Activated T-helper 2 cell treated with anti-CD3 and anti-CD28 coated beads, Interferon-gamma antibody, Interleukin-2, Interleukin-4, amounts not matched to agents 10 μg/mL and 5 μg/mL and 100 μg/mL, durations not matched to agents 14 hours and 24 hours and 36 hours (primary cell): ENCODE measurements at regions of chr15 and their contacts with region 1.

Region 1: DNA sequence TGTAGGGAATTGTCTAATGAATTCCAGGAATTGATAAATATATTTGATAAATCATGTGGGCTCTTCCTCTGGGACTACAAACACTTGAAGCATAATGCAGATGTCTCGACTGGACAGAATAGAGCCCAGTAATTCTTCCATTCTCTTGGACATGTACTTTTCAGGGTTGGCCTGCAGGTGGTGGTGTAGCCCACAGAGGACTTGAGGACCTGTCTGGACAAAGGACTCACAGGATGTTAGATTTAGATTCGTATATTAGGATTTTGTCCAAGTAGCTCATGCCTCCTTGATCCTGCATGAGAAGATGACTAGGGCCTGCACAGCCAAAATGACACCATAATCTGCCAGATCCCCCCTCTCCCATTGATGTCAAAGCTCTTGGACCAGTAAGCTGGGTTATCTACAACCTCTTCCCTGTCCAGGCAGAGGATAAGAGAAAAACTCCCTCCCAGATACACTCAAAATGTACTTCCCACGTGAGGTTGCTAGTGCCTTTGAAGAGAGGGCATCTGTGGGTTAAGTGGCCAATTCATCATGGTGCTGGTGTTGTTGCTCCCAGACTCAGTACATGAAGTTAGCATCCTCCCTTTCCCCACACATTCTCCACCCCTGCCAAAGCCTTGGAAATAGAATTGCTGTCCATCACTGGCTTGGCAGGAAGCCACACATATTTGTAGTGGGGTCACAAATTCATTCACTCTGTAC is 88.6 kb upstream of the ZNF280D start:
- DNase-seq: peak; percentile 17
- H3K4me3 Mint-ChIP-seq: no peak overlapping the region
- H3K27ac Mint-ChIP-seq: no peak overlapping the region
- H3K4me1 Mint-ChIP-seq: peaks cover 3% of the 10 kb centered on the region
- H3K27me3 Mint-ChIP-seq: peaks cover 4% of the 10 kb centered on the region

Region 2: GRCh38 chr15:56805466-56806146 is 16.3 kb before region 1 on chr15:
- intact Hi-C with region 1: no loop called
- DNase-seq: no peak
- H3K4me3 Mint-ChIP-seq: no peak overlapping the region
- H3K27ac Mint-ChIP-seq: no peak overlapping the region
- H3K4me1 Mint-ChIP-seq: peaks cover 5% of the 10 kb centered on the region
- H3K27me3 Mint-ChIP-seq: peaks cover 9% of the 10 kb centered on the region

Region 3: DNA sequence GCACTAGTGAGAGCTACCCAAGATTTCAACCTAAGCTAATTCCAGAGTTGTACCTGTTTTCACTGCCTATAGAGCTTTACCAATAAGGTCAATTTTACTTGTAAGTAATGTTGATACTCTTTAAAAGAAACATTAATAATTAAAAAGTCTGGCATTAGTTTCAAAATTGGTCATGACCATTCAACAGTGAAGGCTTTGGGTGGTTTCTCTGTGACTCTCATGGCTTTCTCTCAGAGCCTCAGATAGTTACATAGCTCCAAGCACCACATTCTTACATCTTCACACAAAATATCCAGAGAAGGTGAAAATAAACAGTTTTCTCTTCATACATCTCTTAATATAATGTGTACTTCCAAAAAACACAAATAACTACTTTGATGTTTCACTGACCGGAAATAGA is 35.1 kb after region 1 on chr15:
- intact Hi-C with region 1: no loop called
- DNase-seq: no peak
- H3K4me3 Mint-ChIP-seq: no peak overlapping the region
- H3K27ac Mint-ChIP-seq: no peak overlapping the region
- H3K4me1 Mint-ChIP-seq: no peaks in the 10 kb centered on the region
- H3K27me3 Mint-ChIP-seq: peaks cover 15% of the 10 kb centered on the region

Region 4: DNA sequence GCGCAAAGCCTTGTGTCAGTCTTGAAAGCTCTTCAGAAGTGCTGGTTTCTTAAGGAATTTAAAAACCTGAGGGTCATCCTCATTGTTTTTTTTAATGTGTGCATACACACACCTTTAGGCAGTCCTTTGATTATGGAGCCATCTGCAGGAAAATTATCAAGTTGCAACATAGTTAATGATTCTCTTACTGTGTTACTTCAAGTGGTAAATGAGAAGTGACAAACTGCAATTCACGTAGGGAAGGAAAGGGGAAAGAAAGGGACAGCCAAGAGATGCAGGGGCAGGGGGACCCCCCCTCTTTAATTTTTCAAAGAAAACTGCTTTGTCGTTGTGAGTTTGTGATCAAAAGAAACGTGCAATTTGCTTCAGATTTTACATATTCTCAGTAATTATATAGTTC is 392.0 kb after region 1 on chr15:
- intact Hi-C with region 1: loop called (anchors 5 kb)
- DNase-seq: no peak
- H3K4me3 Mint-ChIP-seq: no peak overlapping the region
- H3K27ac Mint-ChIP-seq: no peak overlapping the region
- H3K4me1 Mint-ChIP-seq: peaks cover 2% of the 10 kb centered on the region
- H3K27me3 Mint-ChIP-seq: peaks cover 1% of the 10 kb centered on the region